Testis (tissue), 5 donors: ENCODE measurements at regions of chr12 and their contacts with region 1.

Region 1: GRCh38 chr12:53999559-54000104 is 329 bp upstream of the HOXC9 start:
- DNase-seq: peak; percentile 80
- H3K4me3 ChIP-seq: peak overlapping the region; percentile 59 to 72
- H3K27ac ChIP-seq: peak overlapping the region; percentile 37 to 64
- H3K4me1 ChIP-seq: peaks cover 34% of the 10 kb centered on the region
- H3K27me3 ChIP-seq: no peaks in the 10 kb centered on the region
- CTCF ChIP-seq: no peak
- POLR2A ChIP-seq: no peak

Region 2: DNA sequence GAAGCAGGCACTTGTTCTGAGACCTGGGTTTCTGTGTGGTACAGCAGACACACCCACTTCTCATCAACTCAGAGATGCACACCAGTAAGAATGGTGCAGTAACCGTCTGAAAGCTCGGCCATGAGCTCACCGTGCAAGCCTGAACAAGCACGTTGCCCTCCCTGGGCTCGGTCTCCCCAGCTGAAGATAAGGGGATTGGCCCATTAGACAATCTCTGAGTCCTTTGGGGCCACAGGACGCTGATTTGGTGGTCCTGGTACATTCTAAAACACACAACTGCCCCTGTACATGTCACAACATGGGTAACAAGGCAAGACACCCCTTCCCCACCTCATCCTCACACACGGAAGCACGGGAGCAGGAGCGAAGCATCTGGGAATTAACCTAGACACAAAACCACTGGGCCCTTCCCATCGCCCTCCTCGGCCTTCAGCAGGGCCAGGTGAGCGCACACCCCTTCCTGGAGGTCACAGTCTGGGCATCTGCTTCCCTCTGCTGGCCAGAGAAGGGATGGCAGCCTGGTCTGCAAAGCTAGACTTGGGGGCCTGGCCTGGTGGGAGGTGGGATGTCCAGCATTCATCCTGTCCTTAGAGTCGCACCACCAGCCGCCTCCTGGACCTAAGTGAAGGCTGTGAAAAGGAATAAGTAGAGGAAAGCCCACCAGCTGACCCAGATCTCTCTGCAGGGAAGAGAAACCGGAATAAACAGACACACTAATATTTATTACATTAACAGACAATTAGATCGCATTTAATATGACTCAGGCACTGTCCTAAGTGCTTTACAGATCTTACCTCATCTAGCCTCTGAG is 208.1 kb after region 1 on chr12:
- intact Hi-C with region 1: loop called (anchors 5 kb)
- DNase-seq: peak; percentile 85
- H3K4me3 ChIP-seq: no peak overlapping the region
- H3K27ac ChIP-seq: no peak overlapping the region
- H3K4me1 ChIP-seq: no peaks in the 10 kb centered on the region
- H3K27me3 ChIP-seq: no peaks in the 10 kb centered on the region
- CTCF ChIP-seq: peak; percentile 81 to 90 (median 88)
- POLR2A ChIP-seq: no peak